ENCODE measurements at regions of chr10 and their contacts with region 1.

Region 1: GRCh38 chr10:14185316-14186045 is 145.2 kb downstream of the FRMD4A start:
- DNase-seq: peak in 3 of 5 donors; percentile 74 to 85 (median 80)
- H3K4me3 ChIP-seq: peak overlapping the region in 1 of 2 donors; percentile 7
- H3K4me3 Mint-ChIP-seq: peak overlapping the region; percentile 73 to 86 (median 80)
- H3K27ac ChIP-seq: peak overlapping the region; percentile 51
- H3K27ac Mint-ChIP-seq: peak overlapping the region; percentile 93 to 99 (median 98)
- H3K4me1 ChIP-seq: peaks cover 24% of the 10 kb centered on the region
- H3K4me1 Mint-ChIP-seq: peaks cover 21 to 28% (median 24%) of the 10 kb centered on the region in 4 donors
- H3K27me3 ChIP-seq: peaks cover 9% of the 10 kb centered on the region
- H3K27me3 Mint-ChIP-seq: peaks cover 19 to 23% of the 10 kb centered on the region in 2 donors

Region 2: DNA sequence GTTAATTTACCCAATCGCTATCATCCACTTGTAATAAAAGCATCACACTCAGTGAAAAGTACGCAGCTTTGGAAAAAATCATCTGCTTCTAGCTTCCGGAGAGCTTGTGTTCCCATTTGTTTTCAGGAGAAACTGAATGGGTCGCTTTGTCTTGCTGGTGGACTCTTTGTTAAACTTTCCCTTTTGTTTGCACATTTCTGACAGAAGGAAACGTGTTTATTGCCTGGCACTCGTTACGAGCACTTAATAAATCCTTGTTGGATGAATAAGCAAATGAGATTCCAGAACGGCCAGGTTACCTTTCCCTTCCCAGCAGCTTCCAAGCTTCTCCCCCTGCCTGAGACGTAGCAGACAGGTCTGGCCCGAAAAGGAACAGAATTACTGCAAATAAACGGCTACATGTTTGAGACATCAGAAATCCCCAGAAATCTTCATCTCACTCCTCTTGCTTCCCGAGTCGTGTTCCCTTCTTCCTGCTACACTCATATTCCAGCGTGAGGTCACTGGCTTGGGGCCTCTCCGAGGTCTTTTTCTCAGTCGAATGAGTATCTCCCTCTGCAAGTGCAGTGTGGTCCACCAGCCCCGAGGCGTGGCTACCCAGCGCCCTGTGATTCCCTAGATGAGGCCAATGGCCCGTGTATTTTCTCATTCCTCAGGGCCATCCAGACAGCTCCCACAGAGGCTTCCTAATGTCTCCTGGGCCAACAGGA is 21.9 kb before region 1 on chr10:
- CTCF ChIA-PET with region 1: no interaction called
- POLR2A ChIA-PET with region 1: no interaction called
- intact Hi-C with region 1: no loop called
- DNase-seq: no peak
- H3K4me3 ChIP-seq: no peak overlapping the region
- H3K4me3 Mint-ChIP-seq: no peak overlapping the region
- H3K27ac ChIP-seq: no peak overlapping the region
- H3K27ac Mint-ChIP-seq: no peak overlapping the region
- H3K4me1 ChIP-seq: no peaks in the 10 kb centered on the region
- H3K4me1 Mint-ChIP-seq: no peaks in the 10 kb centered on the region
- H3K27me3 ChIP-seq: no peaks in the 10 kb centered on the region
- H3K27me3 Mint-ChIP-seq: peaks cover 36 to 38% of the 10 kb centered on the region in 2 donors

Region 3: DNA sequence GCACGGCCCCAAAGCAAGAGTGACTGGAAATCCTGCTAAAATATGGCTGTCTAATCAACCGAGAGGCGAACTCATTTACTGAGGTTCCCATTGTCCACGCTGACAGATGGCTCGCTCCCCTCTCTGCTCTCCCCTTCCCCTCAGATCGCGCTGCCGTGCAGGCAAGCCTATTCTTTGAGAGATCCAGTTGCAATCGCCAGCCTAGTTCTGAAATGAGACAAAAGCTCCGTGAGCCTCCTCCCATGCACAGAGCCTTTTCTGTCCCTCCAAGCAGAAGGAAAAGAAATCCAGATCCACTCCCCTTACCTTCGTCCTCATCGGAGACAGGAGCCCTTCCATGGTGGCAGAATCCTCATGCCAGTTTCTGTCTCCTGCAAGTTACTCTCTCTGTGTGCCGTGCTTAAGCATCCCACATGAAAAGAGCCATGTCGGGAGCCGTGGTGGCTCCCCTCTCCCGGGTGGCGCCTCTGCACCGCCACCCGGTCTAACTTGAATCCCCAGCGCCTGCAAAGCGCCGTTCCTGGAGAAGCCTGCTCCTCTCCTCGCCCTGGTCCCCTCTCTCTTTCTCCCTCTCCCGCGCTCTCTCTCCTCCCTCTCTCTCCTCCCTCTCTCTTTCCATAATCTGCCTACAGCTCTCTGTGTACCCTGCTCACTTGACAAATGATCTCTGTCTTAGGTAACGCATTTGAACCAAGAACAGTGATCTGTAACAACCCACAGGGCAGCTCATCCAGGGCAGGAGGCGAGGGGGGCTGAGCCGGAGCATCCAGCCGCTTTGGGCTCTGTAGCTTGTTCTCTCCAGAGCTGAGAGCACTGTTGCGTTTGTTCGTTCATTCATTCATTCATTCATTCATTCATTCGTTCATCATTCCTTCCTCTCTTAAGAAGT is 11.5 kb before region 1 on chr10:
- CTCF ChIA-PET with region 1: interaction called, 3 read pairs
- POLR2A ChIA-PET with region 1: interaction called, 14 read pairs
- intact Hi-C with region 1: loop called (anchors 1 kb)
- DNase-seq: peak in 3 of 5 donors; percentile 20 to 31 (median 31)
- H3K4me3 ChIP-seq: peak overlapping the region in 1 of 2 donors; percentile 58
- H3K4me3 Mint-ChIP-seq: peak overlapping the region; percentile 81 to 95 (median 86)
- H3K27ac ChIP-seq: no peak overlapping the region
- H3K27ac Mint-ChIP-seq: peak overlapping the region; percentile 10 to 58 (median 43)
- H3K4me1 ChIP-seq: peaks cover 12% of the 10 kb centered on the region
- H3K4me1 Mint-ChIP-seq: peaks cover 10 to 18% (median 16%) of the 10 kb centered on the region in 4 donors
- H3K27me3 ChIP-seq: peaks cover 21% of the 10 kb centered on the region
- H3K27me3 Mint-ChIP-seq: peaks cover 47 to 73% of the 10 kb centered on the region in 2 donors

Region 4: DNA sequence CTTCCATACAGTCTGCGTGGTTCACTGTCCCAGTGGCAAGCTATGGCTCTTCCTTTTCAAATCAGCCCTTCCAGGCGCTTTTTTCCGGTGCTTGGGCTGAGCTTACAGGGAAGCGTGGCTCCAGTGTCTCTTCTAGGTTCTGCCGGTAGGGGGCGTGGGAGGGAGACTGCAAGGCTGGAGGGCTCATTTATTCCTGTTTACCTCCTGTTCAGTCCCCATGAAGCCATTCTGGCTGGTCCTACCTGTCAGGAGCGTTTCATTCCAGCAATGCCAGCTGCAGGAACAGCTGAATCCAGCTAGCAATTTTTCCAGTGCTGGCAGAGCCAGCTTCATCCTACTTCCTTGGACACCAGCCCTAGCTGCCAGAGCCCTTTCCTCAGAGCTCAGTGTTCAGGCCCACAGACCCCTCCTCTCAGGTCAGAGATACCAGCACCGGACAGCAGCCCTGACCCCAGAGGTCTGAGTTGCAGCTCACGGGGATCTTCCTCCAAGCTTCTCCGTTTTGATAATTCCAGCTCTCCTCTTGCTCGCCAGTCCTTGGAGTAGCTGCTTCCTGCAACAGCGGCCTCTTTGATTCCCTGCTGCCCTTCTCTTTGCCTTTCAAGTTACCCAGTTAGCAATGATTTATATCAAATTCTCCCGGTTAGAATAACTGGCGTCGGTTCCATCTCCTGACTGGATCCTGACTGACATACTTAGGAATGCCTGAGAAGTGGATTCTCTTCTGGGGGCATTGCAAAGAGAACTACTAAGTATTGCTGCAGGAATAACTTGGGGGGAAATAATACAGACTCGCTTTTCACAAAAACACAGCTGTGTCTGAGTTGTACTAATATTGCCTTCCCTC is 15.4 kb after region 1 on chr10:
- CTCF ChIA-PET with region 1: interaction called, 101 read pairs
- POLR2A ChIA-PET with region 1: interaction called, 3 read pairs
- intact Hi-C with region 1: no loop called
- DNase-seq: peak in 1 of 5 donors; percentile 26
- H3K4me3 ChIP-seq: no peak overlapping the region
- H3K4me3 Mint-ChIP-seq: no peak overlapping the region
- H3K27ac ChIP-seq: no peak overlapping the region
- H3K27ac Mint-ChIP-seq: no peak overlapping the region
- H3K4me1 ChIP-seq: no peaks in the 10 kb centered on the region
- H3K4me1 Mint-ChIP-seq: no peaks in the 10 kb centered on the region
- H3K27me3 ChIP-seq: no peaks in the 10 kb centered on the region
- H3K27me3 Mint-ChIP-seq: peaks cover 10 to 24% of the 10 kb centered on the region in 2 donors

Measured in CD4-positive, alpha-beta memory T cell (primary cell).